CD4-positive, alpha-beta memory T cell (primary cell): ENCODE measurements at regions of chr1 and their contacts with region 1.

Region 1: DNA sequence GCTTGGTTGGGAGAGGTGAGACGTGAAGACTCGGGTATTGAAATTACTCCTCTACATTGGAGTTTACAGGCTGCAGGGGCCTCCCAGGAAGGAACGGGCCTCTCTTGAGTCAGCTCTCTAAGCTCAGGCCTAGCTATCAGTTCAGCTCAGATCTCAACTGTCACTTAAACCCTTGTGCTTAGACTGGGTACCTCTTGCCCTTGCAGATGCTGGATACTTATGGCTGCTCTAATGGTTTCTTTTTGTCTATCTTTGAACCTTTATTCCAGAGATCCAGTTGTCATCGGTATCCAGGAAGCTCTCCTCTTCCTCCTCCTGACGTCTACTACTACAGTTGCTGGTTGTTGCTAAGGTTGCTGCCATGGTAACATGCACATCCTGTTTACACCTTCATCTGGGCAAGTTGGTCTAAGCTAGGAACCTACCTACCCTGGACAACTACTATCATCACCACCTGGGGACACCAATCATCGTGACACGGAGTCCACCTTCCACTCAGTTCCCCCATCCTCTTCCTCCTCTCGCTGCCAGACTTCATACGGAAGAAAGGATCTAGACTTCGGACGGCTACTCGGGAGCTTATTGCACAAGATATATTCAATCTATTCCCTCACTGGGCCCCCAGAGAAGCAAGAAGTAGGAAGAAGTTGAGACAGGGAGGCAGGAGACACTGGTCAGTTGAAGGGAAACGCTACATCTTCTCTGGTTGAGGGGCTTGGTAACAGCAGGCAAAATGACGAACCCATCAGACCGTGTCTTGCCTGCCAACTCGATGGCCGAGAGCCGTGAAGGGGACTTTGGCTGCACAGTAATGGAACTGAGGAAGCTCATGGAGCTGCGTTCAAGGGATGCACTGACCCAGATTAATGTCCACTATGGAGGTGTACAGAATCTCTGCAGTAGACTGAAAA is 56.1 kb downstream of the ATP2B4 start:
- DNase-seq: peak; percentile 85 to 93 (median 90)
- H3K4me3 ChIP-seq: peak overlapping the region in 1 of 2 donors; percentile 12
- H3K4me3 Mint-ChIP-seq: peak overlapping the region; percentile 39 to 73 (median 63)
- H3K27ac ChIP-seq: peak overlapping the region; percentile 74
- H3K27ac Mint-ChIP-seq: peak overlapping the region; percentile 89 to 99 (median 98)
- H3K4me1 ChIP-seq: peaks cover 73% of the 10 kb centered on the region
- H3K4me1 Mint-ChIP-seq: peaks cover 47 to 77% (median 62%) of the 10 kb centered on the region in 4 donors
- H3K27me3 ChIP-seq: no peaks in the 10 kb centered on the region
- H3K27me3 Mint-ChIP-seq: no peaks in the 10 kb centered on the region

Region 2: DNA sequence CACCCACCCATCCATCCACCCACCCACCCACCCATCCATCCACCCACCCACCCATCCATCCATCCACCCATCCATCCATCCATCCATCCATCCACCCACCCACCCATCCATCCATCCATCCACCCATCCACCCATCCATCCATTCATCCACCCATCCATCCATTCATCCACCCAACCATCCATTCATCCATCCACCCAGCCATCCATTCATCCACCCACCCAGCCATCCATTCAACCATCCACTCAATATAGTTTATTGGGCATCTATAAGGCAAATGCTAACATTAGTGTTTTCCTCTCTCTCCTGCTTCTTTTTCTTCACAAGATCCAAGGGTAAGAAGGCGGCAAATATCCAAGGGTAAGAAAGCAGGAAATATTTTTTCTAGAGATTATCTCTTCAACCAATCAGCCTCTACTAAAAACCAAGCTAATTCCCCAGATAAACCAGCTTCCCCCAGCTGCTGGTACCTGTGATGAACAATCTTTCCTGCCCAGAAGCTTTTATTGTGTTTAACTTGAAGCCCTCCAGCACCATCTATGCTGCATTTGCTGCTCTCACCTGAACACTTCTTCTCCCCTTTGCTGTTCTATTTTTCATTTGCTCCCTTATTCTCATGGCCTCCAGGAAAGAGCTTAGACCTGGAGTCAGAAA is 78.7 kb before region 1 on chr1:
- CTCF ChIA-PET with region 1: interaction called, 4 read pairs
- POLR2A ChIA-PET with region 1: interaction called, 15 read pairs
- intact Hi-C with region 1: no loop called
- DNase-seq: no peak
- H3K4me3 ChIP-seq: no peak overlapping the region
- H3K4me3 Mint-ChIP-seq: peak overlapping the region in 1 of 8 donors; percentile 37
- H3K27ac ChIP-seq: no peak overlapping the region
- H3K27ac Mint-ChIP-seq: peak overlapping the region in 5 of 7 donors; percentile 23 to 69 (median 61)
- H3K4me1 ChIP-seq: peaks cover 49% of the 10 kb centered on the region
- H3K4me1 Mint-ChIP-seq: peaks cover 33 to 55% (median 42%) of the 10 kb centered on the region in 4 donors
- H3K27me3 ChIP-seq: no peaks in the 10 kb centered on the region
- H3K27me3 Mint-ChIP-seq: no peaks in the 10 kb centered on the region

Region 3: DNA sequence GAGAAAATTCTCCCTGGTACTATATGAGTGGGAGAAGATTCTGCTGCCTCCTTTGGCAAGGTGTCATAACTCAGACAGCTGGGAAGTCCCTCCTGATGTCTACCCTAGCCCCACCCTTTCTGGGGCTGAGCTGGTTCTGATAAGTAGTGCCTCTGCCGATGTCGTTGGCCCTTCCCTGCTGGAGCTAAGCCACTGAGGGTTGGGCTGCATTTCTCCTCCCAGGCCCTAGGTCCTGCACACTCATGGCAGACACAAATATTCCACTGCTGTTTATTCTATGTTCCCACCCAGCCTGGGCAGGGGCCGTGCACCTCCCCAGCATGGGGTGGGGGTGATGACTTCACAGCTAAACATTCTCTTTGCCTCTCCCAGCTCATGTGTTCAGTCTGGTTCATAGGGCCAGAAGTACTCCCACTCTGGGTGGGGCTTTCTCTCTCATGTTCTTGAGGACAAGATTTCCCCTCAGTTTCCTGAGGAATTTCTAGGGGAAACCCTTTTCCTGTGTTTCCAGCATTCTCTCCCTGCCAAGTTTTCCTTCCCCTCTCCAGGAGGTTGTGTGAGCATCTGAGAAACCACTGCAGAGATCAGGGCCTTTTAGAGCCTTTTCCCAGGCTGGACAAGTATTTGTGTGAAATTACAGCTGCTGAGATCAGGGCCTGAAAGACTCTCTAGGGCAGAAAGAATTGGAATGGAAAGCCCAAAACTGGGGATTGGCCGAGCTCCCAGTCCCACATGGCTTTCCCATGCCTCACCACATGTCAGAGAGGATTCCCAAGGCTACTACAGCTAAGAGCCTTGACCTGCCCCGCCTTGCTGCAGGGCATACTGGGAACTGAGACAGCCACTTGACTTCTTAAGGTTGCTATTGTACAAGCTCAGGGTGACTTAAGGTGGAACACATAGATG is 10.1 kb after region 1 on chr1:
- CTCF ChIA-PET with region 1: interaction called, 74 read pairs
- POLR2A ChIA-PET with region 1: interaction called, 22 read pairs
- intact Hi-C with region 1: no loop called
- DNase-seq: no peak
- H3K4me3 ChIP-seq: no peak overlapping the region
- H3K4me3 Mint-ChIP-seq: peak overlapping the region in 7 of 8 donors; percentile 18 to 78 (median 46)
- H3K27ac ChIP-seq: peak overlapping the region; percentile 42
- H3K27ac Mint-ChIP-seq: peak overlapping the region; percentile 85 to 97 (median 91)
- H3K4me1 ChIP-seq: peaks cover 64% of the 10 kb centered on the region
- H3K4me1 Mint-ChIP-seq: peaks cover 49 to 88% (median 64%) of the 10 kb centered on the region in 4 donors
- H3K27me3 ChIP-seq: no peaks in the 10 kb centered on the region
- H3K27me3 Mint-ChIP-seq: no peaks in the 10 kb centered on the region

Region 4: DNA sequence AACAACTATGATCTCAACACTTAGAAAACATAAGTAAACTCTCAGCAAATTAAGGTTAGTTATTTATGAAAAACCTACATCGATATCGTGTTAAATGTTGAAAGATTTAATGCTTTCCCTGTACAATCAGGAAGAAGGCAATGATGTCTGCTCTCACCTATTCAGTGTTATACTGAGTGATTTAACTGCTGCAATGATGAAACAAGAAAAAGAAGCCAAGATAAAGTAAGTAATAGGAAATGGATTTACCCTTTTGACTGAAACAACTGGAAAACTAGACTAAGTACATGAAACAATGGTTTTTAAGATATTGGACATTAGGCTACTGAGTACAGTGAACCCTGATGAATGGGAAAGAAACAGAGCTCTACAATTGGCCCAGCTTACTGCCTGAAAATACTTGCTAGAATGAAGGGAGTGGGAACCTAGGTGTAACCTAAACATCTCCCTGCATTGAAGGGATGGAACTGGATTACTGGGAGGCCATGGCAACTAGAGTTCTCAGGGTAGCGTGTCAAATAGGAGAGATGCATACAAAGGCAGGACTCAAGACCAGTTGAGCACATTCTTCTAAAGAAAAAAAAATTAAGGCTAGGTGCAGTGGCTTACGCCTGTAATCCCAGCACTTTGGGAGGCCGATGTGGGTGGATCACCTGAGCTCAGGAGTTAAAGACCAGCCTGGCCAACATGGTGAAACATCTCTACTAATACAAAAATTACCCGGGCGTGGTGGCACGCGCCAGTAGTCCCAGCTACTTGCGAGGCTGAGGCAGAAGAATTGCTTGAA is 215.9 kb after region 1 on chr1:
- CTCF ChIA-PET with region 1: no interaction called
- POLR2A ChIA-PET with region 1: no interaction called
- intact Hi-C with region 1: no loop called
- DNase-seq: no peak
- H3K4me3 ChIP-seq: no peak overlapping the region
- H3K4me3 Mint-ChIP-seq: no peak overlapping the region
- H3K27ac ChIP-seq: no peak overlapping the region
- H3K27ac Mint-ChIP-seq: no peak overlapping the region
- H3K4me1 ChIP-seq: no peaks in the 10 kb centered on the region
- H3K4me1 Mint-ChIP-seq: no peaks in the 10 kb centered on the region
- H3K27me3 ChIP-seq: no peaks in the 10 kb centered on the region
- H3K27me3 Mint-ChIP-seq: peaks cover 0 to under 1% of the 10 kb centered on the region in 2 donors